ENCODE measurements at regions of chr12 and their contacts with region 1.

Region 1: GRCh38 chr12:77010691-77011548 is 54.4 kb downstream of the E2F7 start:
- ATAC-seq: peak; percentile 91 to 99 (median 97)
- H3K4me3 ChIP-seq: peak overlapping the region in 4 of 5 donors; percentile 9 to 17 (median 12)
- H3K27ac ChIP-seq: no peak overlapping the region
- H3K4me1 ChIP-seq: no peaks in the 10 kb centered on the region

Region 2: DNA sequence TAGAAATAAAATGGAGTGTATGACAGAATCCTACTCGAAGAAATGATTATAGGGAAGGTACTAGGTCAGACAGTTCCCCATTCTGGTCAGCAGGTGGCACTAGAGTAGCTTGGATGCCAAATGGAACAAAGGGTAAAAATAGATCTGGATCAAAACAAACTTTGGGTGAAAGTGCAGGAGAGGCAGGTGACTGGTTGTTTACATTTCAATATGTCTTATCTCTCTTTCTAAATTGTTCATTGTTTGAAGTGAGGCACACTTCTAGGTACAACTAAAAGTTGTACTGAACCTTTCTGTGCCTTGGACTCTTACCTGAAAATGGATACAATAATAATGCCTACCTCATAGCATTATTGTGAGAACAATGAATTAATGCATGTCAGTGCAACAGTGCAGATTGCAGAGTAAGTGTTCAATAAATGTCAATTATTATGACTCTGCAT is 389.3 kb before region 1 on chr12:
- in situ Hi-C with region 1: loop called in 6 of 9 experiments (anchors 25 kb)
- ATAC-seq: peak; percentile 62 to 77 (median 66)
- H3K4me3 ChIP-seq: no peak overlapping the region
- H3K27ac ChIP-seq: no peak overlapping the region
- H3K4me1 ChIP-seq: peaks cover 0 to 12% of the 10 kb centered on the region in 2 donors

Region 3: DNA sequence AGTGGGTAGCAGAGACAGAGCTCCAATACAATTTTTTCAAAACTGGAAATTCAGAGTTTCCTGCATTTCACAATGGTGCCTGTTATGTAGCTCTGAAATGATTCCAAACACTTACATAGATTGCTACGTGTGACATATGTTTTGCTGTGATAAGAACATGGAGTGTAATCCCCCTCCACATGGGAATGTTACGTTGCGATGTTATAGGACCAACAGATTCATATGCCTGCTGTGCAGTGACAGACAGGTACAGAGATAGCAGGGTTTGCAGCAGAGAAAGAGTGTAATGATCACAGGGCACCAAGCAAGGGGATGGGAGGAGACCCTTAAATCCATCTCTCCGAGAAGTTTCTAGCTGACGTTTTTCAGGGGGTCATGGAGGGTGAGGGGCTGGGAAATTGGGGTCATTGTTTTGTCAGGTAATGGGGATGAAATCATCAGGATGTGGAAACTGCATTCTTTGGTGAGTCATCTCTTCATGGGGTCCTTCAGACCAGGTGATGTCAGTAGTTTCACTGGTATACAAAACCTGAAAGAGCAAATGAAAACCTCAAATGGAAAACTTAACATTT is 374.7 kb before region 1 on chr12:
- in situ Hi-C with region 1: loop called in 2 of 9 experiments (anchors 25 kb)
- ATAC-seq: peak in 4 of 8 experiments; percentile 16 to 70 (median 61)
- H3K4me3 ChIP-seq: no peak overlapping the region
- H3K27ac ChIP-seq: no peak overlapping the region
- H3K4me1 ChIP-seq: peaks cover 12 to 21% of the 10 kb centered on the region in 2 donors

Region 4: GRCh38 chr12:76820888-76821482 is 189.9 kb before region 1 on chr12:
- in situ Hi-C with region 1: no loop called
- ATAC-seq: peak in 3 of 8 experiments; percentile 48 to 60 (median 60)
- H3K4me3 ChIP-seq: no peak overlapping the region
- H3K27ac ChIP-seq: no peak overlapping the region
- H3K4me1 ChIP-seq: no peaks in the 10 kb centered on the region

Region 5: GRCh38 chr12:76957301-76957700 is 53.6 kb before region 1 on chr12:
- in situ Hi-C with region 1: no loop called
- ATAC-seq: no peak
- H3K4me3 ChIP-seq: no peak overlapping the region
- H3K27ac ChIP-seq: no peak overlapping the region
- H3K4me1 ChIP-seq: no peaks in the 10 kb centered on the region